Dorsolateral prefrontal cortex (tissue), 120 donors: ENCODE measurements at regions of chr11 and their contacts with region 1.

Region 1: GRCh38 chr11:47213985-47214564 is 699 bp upstream of the DDB2 start:
- DNase-seq: peak; percentile 93 to 98 (median 97)
- H3K4me3 ChIP-seq: peak overlapping the region; percentile 46 to 92 (median 75)
- H3K27ac ChIP-seq: peak overlapping the region; percentile 82 to 100 (median 98)
- H3K27me3 ChIP-seq: no peaks in the 10 kb centered on the region
- CTCF ChIP-seq: peak in 13 of 56 donors; percentile 3 to 36 (median 17)

Region 2: DNA sequence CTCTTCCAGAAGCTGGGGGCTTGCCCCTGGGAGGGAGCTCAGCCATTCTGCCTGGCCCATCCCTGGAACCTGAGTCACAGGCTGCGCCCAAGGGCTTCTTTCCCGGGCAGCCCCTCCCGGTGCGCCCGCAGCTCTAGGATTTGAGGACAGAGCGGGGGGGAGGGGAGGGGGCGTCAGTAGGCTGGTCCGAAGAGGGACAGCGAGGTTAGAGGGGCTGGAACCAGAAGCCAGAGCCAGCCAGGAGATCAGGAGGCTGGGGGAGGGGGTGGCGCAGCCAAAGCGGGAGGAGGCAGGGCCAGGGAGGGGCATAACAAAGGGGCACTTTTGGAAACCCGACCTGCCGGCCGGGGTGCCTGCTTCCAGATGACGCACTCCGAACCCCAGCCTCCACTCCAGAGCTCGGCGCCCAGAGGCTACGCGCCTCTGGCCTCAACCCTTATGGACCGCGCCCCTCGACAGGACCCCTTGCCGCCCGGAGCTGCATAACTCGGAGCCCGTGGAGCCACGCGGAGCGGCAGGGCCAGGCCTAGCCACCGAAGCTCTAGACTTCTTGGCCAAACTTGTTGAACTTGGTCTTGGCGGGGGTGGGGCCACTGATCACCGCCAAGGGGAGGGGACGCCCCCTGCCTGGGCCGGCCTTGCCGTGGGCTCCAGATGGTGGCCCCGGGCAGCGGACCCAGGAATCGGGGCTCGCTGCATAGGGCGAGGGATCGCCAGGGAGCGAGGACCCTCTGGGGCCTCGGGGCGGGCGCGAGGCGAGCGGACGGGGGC is 28.6 kb before region 1 on chr11:
- intact Hi-C with region 1: loop called in 1 of 2 experiments (anchors 2 kb)
- DNase-seq: peak in 3 of 10 donors; percentile 27 to 59 (median 41)
- H3K4me3 ChIP-seq: peak overlapping the region; percentile 52 to 82 (median 68)
- H3K27ac ChIP-seq: peak overlapping the region; percentile 77 to 100 (median 96)
- H3K27me3 ChIP-seq: peaks cover 0 to 6% (median 0%) of the 10 kb centered on the region in 45 donors
- CTCF ChIP-seq: no peak

Region 3: DNA sequence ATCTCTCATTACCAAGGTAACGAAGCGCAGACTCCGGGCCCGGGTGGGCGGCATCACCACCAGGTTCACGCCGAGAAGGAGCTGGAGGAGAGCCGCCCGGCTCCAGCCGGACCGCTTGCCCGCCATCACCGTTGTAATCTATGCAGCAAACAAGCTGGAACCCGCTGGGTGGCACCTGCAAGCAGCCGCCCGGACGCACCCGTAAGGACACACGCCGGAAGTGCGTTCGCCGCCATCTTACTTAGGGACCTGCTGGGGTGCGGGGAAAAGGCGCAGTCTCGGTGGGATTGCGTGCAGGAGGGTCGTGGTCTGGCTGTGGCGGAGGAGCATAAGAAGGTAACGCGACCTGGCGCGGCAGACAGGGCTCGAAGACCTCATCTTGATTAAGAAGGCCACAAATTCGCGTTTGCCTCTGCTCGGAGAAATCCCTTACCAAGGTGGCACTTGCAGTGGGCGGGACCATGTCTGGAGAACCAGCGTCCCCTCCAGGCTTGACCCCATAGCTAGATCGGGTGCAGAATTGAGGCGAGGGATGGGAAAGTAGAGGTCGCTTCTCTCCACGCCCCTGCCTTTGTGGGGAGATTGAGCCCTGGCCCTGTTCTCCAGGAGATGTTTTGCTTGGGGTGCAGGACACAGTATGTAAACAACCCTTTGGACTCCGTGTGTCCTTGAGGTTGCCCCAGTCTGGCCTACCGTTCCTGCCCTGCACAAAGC is 34.7 kb after region 1 on chr11 and contains the start of gene ACP2:
- intact Hi-C with region 1: loop called in 1 of 2 experiments (anchors 1 kb)
- DNase-seq: peak; percentile 85 to 95 (median 93)
- H3K4me3 ChIP-seq: peak within 1 kb of the TSS; percentile 64 to 96 (median 87)
- H3K27ac ChIP-seq: peak within 1 kb of the TSS; percentile 32 to 97 (median 91)
- H3K27me3 ChIP-seq: no peaks in the 10 kb centered on the region
- CTCF ChIP-seq: peak in 49 of 56 donors; percentile 7 to 71 (median 42)
- total RNA-seq, gene ACP2: 23.3 to 58.3 (median 37.1) TPM

Region 4: DNA sequence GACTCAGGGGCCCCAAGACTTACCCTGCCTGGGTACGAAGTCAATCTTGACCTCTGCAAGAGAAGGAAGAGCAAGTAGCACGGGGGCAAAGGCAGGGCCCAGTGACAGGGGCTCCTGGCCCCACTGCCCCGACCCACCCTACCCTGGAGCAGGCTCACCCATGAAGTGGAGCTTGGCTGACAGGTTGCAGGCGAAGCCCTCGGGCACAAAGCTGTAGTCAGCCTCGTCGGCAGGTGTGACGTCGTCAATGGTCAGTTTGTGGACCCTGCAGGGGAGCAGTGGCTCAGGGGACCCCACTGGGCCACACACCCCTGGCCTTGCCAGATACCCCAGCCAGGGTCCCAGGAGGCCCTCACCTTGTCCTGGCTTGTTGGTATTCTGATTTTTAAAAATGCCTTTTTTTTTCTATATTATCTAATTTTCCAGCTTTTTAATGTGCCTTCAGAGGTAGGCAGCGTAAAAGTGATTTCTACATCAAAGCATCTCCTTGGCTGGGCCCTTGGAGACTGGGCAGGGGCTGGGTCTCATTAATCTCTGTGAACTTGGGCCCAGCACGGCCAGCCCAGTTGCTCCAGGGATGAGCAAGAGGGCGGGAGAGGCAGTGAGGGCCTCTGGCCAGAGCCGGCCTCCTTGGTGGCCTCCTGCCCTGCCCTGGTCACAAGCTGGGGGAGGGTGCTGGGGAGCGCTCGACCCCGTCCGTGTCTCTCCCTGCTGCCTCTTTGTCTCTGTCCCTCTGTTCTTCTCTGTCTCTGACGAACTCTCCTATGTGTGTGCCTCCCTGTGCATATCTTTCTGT is 127.1 kb after region 1 on chr11:
- intact Hi-C with region 1: no loop called
- DNase-seq: no peak
- H3K4me3 ChIP-seq: no peak overlapping the region
- H3K27ac ChIP-seq: no peak overlapping the region
- H3K27me3 ChIP-seq: no peaks in the 10 kb centered on the region
- CTCF ChIP-seq: no peak